GM12878 (cell line): ENCODE measurements at regions of chr15 and their contacts with region 1.

Region 1: GRCh38 chr15:70604666-70605315 is 158.6 kb downstream of the UACA start:
- DNase-seq: no peak
- ATAC-seq: no peak
- H3K4me3 ChIP-seq: no peak overlapping the region
- H3K27ac ChIP-seq: no peak overlapping the region
- H3K4me1 ChIP-seq: no peaks in the 10 kb centered on the region
- H3K27me3 ChIP-seq: peaks cover 0 to 2% of the 10 kb centered on the region in 2 experiments; a peak in 3 of 4 replicates
- CTCF ChIP-seq: no peak
- EP300 ChIP-seq: no peak
- POLR2A ChIP-seq: no peak
- RAD21 ChIP-seq: no peak

Region 2: GRCh38 chr15:70589221-70589620 is 15.6 kb before region 1 on chr15:
- CTCF ChIA-PET with region 1: no interaction called
- POLR2A ChIA-PET with region 1: no interaction called
- RAD21 ChIA-PET with region 1: no interaction called
- SMC1A ChIA-PET with region 1: no interaction called
- in situ Hi-C with region 1: no loop called
- intact Hi-C with region 1: no loop called
- DNase-seq: no peak
- ATAC-seq: no peak
- H3K4me3 ChIP-seq: no peak overlapping the region
- H3K27ac ChIP-seq: no peak overlapping the region
- H3K4me1 ChIP-seq: no peaks in the 10 kb centered on the region
- H3K27me3 ChIP-seq: peaks cover 0 to 2% of the 10 kb centered on the region in 2 experiments; a peak in 3 of 4 replicates
- CTCF ChIP-seq: no peak
- EP300 ChIP-seq: no peak
- POLR2A ChIP-seq: no peak
- RAD21 ChIP-seq: no peak

Region 3: GRCh38 chr15:70627734-70628548 is 23.1 kb after region 1 on chr15:
- CTCF ChIA-PET with region 1: no interaction called
- POLR2A ChIA-PET with region 1: no interaction called
- RAD21 ChIA-PET with region 1: no interaction called
- SMC1A ChIA-PET with region 1: no interaction called
- in situ Hi-C with region 1: no loop called
- intact Hi-C with region 1: no loop called
- DNase-seq: no peak
- ATAC-seq: no peak
- H3K4me3 ChIP-seq: no peak overlapping the region
- H3K27ac ChIP-seq: no peak overlapping the region
- H3K4me1 ChIP-seq: no peaks in the 10 kb centered on the region
- H3K27me3 ChIP-seq: peaks cover 0 to 1% of the 10 kb centered on the region in 2 experiments; a peak in 1 of 4 replicates
- CTCF ChIP-seq: no peak
- EP300 ChIP-seq: no peak
- POLR2A ChIP-seq: no peak
- RAD21 ChIP-seq: no peak

Region 4: GRCh38 chr15:70650567-70651302 is 45.9 kb after region 1 on chr15:
- CTCF ChIA-PET with region 1: no interaction called
- POLR2A ChIA-PET with region 1: no interaction called
- RAD21 ChIA-PET with region 1: no interaction called
- SMC1A ChIA-PET with region 1: no interaction called
- in situ Hi-C with region 1: loop called (anchors 5 kb)
- intact Hi-C with region 1: no loop called
- DNase-seq: no peak
- ATAC-seq: no peak
- H3K4me3 ChIP-seq: no peak overlapping the region
- H3K27ac ChIP-seq: no peak overlapping the region
- H3K4me1 ChIP-seq: no peaks in the 10 kb centered on the region
- H3K27me3 ChIP-seq: no peaks in the 10 kb centered on the region
- CTCF ChIP-seq: no peak
- EP300 ChIP-seq: no peak
- POLR2A ChIP-seq: no peak
- RAD21 ChIP-seq: no peak

Region 5: GRCh38 chr15:70806992-70807712 is 202.4 kb after region 1 on chr15:
- CTCF ChIA-PET with region 1: no interaction called
- POLR2A ChIA-PET with region 1: no interaction called
- RAD21 ChIA-PET with region 1: no interaction called
- SMC1A ChIA-PET with region 1: no interaction called
- in situ Hi-C with region 1: no loop called
- intact Hi-C with region 1: no loop called
- DNase-seq: no peak
- ATAC-seq: no peak
- H3K4me3 ChIP-seq: no peak overlapping the region
- H3K27ac ChIP-seq: no peak overlapping the region
- H3K4me1 ChIP-seq: no peaks in the 10 kb centered on the region
- H3K27me3 ChIP-seq: no peaks in the 10 kb centered on the region; a peak in 1 of 4 replicates
- CTCF ChIP-seq: no peak
- EP300 ChIP-seq: no peak
- POLR2A ChIP-seq: no peak
- RAD21 ChIP-seq: no peak